Transverse colon (tissue), 4 donors: ENCODE measurements at regions of chr12 and their contacts with region 1.

Region 1: DNA sequence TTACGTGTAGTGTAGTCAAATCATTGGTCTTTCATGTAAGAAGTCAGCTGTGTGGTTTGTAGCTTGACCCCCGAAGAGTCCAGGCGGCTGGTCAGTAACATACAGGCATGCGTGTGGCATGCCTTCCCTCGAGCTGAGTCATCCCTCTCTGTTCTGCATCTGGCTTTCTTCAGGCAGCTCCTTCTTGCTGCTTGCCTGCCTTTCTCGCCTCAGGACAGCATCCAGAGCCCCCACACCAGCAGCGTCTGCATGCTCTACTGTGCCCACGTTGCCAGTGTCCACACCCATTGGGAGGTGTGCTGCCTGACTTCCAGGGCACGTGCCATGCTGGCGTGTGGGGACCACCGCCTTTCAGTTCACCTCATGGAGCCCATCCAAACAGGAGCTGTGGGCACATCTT is 96.8 kb downstream of the EP400 start:
- DNase-seq: no peak
- H3K4me3 ChIP-seq: no peak overlapping the region
- H3K27ac ChIP-seq: peak overlapping the region in 1 of 4 donors; percentile 51
- H3K4me1 ChIP-seq: no peaks in the 10 kb centered on the region
- H3K27me3 ChIP-seq: no peaks in the 10 kb centered on the region
- CTCF ChIP-seq: no peak
- EP300 ChIP-seq: no peak
- POLR2A ChIP-seq: no peak

Region 2: GRCh38 chr12:132489602-132490239 is 443.2 kb after region 1 on chr12 and contains the start of gene FBRSL1:
- in situ Hi-C with region 1: no loop called
- intact Hi-C with region 1: loop called (anchors 5 kb)
- DNase-seq: peak; percentile 95
- H3K4me3 ChIP-seq: peak within 1 kb of the TSS; percentile 76 to 97 (median 85)
- H3K27ac ChIP-seq: peak within 1 kb of the TSS; percentile 80 to 91 (median 82)
- H3K4me1 ChIP-seq: peaks cover 27 to 52% (median 43%) of the 10 kb centered on the region in 4 donors
- H3K27me3 ChIP-seq: no peaks in the 10 kb centered on the region
- CTCF ChIP-seq: peak in 1 of 5 experiments; percentile 4
- EP300 ChIP-seq: no peak
- POLR2A ChIP-seq: peak; percentile 51
- total RNA-seq, gene FBRSL1: 23.3 to 306 (median 49.7) TPM